Common myeloid progenitor, CD34-positive (primary cell): ENCODE measurements at regions of chr19 and their contacts with region 1.

Region 1: GRCh38 chr19:33998739-33999345 is 173.5 kb upstream of the LSM14A start:
- DNase-seq: peak; percentile 14 to 42 (median 41)
- H3K4me3 ChIP-seq: no peak overlapping the region
- H3K27ac ChIP-seq: no peak overlapping the region
- H3K4me1 ChIP-seq: peaks cover 0 to 6% (median 2%) of the 10 kb centered on the region in 4 experiments
- H3K27me3 ChIP-seq: peaks cover 0 to 3% (median 0%) of the 10 kb centered on the region in 5 experiments

Region 2: GRCh38 chr19:33795370-33796163 is 203.3 kb before region 1 on chr19:
- CTCF ChIA-PET with region 1: interaction called, 11 read pairs
- POLR2A ChIA-PET with region 1: no interaction called
- DNase-seq: peak; percentile 75 to 88 (median 87)
- H3K4me3 ChIP-seq: peak overlapping the region; percentile 60 to 89 (median 78)
- H3K27ac ChIP-seq: peak overlapping the region; percentile 64 to 85
- H3K4me1 ChIP-seq: peaks cover 0 to 27% (median 14%) of the 10 kb centered on the region in 4 experiments
- H3K27me3 ChIP-seq: no peaks in the 10 kb centered on the region

Region 3: GRCh38 chr19:34018546-34018945 is 19.7 kb after region 1 on chr19:
- CTCF ChIA-PET with region 1: no interaction called
- POLR2A ChIA-PET with region 1: no interaction called
- DNase-seq: no peak
- H3K4me3 ChIP-seq: no peak overlapping the region
- H3K27ac ChIP-seq: no peak overlapping the region
- H3K4me1 ChIP-seq: no peaks in the 10 kb centered on the region
- H3K27me3 ChIP-seq: peaks cover 0 to 17% (median 8%) of the 10 kb centered on the region in 5 experiments